OCI-LY7 (cell line): ENCODE measurements at regions of chr18 and their contacts with region 1.

Region 1: GRCh38 chr18:35005963-35006577 is 35.1 kb upstream of the MAPRE2 start:
- DNase-seq: peak; percentile 55
- H3K4me3 ChIP-seq: no peak overlapping the region
- H3K27ac ChIP-seq: no peak overlapping the region
- H3K4me1 ChIP-seq: no peaks in the 10 kb centered on the region
- CTCF ChIP-seq: peak; percentile 76

Region 2: DNA sequence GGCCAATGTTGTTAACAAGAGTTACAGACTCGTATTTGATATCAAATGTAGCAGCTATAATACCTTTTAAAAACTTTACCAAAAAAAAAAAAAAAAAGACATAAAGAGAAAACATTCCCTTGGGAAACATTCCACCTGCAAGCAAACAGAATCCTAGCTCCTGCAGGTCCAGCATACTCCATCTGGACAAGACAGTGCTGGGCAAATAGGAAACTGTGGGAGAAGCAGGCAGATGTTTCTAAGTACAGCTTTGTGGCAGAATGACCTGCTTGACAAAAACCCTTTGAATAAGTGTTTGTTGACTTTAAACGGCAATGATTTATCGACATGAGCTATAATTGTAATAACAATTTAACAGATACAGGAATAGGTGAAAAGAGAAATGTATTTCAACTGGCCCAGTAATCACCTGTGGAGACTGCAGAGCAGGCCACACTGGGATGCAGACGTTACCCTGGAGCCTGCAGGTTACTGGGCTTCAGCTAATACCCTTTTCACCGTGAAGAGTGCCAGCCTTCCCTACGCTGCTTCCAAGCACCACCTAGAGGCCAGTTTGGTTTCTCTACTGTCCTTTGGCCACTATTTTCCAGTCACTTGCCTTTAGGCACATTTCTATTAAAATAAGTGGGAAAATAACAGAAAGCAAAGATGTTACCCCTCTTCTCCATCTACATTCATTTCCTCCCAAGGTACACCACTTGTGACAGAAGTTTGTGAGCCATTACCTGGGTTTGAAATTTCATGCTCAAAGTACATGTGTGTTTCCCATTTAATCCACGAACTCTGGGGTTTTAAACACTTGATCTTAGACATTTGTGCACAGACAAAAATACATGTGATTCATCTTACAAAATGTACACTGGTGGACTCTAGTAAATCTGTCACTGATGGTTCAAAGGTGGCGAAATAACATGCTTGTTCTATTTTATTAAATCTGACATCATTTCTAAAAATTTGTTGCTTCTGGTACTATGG is 137.8 kb after region 1 on chr18:
- CTCF ChIA-PET with region 1: no interaction called
- POLR2A ChIA-PET with region 1: interaction called, 3 read pairs
- intact Hi-C with region 1: loop called (anchors 2 kb)
- DNase-seq: peak; percentile 48
- H3K4me3 ChIP-seq: no peak overlapping the region
- H3K27ac ChIP-seq: no peak overlapping the region
- H3K4me1 ChIP-seq: peaks cover 34% of the 10 kb centered on the region
- CTCF ChIP-seq: peak; percentile 71

Region 3: GRCh38 chr18:35185771-35186170 is 179.7 kb after region 1 on chr18:
- CTCF ChIA-PET with region 1: no interaction called
- POLR2A ChIA-PET with region 1: no interaction called
- intact Hi-C with region 1: no loop called
- DNase-seq: no peak
- H3K4me3 ChIP-seq: no peak overlapping the region
- H3K27ac ChIP-seq: no peak overlapping the region
- H3K4me1 ChIP-seq: peaks cover 10% of the 10 kb centered on the region
- CTCF ChIP-seq: no peak

Region 4: DNA sequence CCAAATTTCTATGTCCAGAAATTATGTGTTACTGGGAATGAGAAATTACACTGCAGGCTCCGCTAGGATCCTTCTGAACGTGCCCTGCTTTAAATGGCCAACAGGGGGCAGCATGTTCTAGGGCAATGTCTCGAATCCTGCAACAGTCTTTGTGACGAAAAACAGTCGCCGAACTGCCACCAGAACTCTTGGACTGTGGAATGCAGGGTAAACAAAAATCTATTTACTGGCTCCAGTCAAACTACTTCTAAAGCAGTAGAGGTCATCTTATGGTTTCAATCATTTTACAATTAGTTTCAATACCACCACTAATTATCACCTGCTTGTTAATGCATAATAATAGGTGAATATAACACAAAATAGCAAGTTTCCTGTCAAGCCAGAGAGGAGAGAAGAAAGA is 225.0 kb after region 1 on chr18:
- CTCF ChIA-PET with region 1: no interaction called
- POLR2A ChIA-PET with region 1: no interaction called
- intact Hi-C with region 1: loop called (anchors 2 kb)
- DNase-seq: peak; percentile 69
- H3K4me3 ChIP-seq: peak overlapping the region; percentile 41
- H3K27ac ChIP-seq: no peak overlapping the region
- H3K4me1 ChIP-seq: no peaks in the 10 kb centered on the region
- CTCF ChIP-seq: peak; percentile 81

Region 5: DNA sequence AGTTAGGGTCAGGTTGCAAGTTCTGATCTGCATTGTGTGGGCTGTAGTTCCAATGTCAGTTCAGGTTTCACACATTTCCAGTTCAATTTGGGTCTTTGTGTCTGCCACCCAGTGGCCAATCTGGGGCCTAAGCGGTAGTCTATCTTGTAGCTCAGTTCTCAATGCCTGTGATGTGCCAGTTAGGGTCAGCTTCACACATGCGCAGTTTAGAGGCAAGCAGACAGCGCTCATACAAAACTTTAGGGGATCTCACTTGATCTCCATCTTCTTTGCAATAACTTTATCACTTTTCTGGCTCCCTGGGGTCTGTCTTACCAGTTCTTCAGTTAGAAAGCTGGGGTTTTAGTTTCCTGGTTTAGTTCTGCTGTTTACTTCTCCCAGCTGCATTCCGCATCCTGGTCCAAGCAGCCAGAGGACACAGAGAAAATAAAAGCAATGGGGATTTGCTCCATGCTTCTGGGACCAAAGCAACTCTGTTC is 349.1 kb after region 1 on chr18:
- CTCF ChIA-PET with region 1: no interaction called
- POLR2A ChIA-PET with region 1: no interaction called
- intact Hi-C with region 1: loop called (anchors 10 kb)
- DNase-seq: peak; percentile 52
- H3K4me3 ChIP-seq: no peak overlapping the region
- H3K27ac ChIP-seq: no peak overlapping the region
- H3K4me1 ChIP-seq: no peaks in the 10 kb centered on the region
- CTCF ChIP-seq: peak; percentile 70